Activated T-helper 2 cell treated with anti-CD3 and anti-CD28 coated beads, Interferon-gamma antibody, Interleukin-2, Interleukin-4, amounts not matched to agents 10 μg/mL and 5 μg/mL and 100 μg/mL, durations not matched to agents 14 hours and 24 hours and 36 hours (primary cell): ENCODE measurements at regions of chr15 and their contacts with region 1.

Region 1: GRCh38 chr15:37709669-37710068 is 224.8 kb upstream of the TMCO5A start:
- DNase-seq: no peak
- H3K4me3 Mint-ChIP-seq: no peak overlapping the region
- H3K27ac Mint-ChIP-seq: no peak overlapping the region
- H3K4me1 Mint-ChIP-seq: no peaks in the 10 kb centered on the region
- H3K27me3 Mint-ChIP-seq: no peaks in the 10 kb centered on the region

Region 2: GRCh38 chr15:37652646-37653417 is 56.8 kb before region 1 on chr15:
- intact Hi-C with region 1: loop called (anchors 10 kb)
- DNase-seq: no peak
- H3K4me3 Mint-ChIP-seq: no peak overlapping the region
- H3K27ac Mint-ChIP-seq: no peak overlapping the region
- H3K4me1 Mint-ChIP-seq: no peaks in the 10 kb centered on the region
- H3K27me3 Mint-ChIP-seq: no peaks in the 10 kb centered on the region